Ovary (tissue), 10 donors: ENCODE measurements at regions of chr3 and their contacts with region 1.

Region 1: DNA sequence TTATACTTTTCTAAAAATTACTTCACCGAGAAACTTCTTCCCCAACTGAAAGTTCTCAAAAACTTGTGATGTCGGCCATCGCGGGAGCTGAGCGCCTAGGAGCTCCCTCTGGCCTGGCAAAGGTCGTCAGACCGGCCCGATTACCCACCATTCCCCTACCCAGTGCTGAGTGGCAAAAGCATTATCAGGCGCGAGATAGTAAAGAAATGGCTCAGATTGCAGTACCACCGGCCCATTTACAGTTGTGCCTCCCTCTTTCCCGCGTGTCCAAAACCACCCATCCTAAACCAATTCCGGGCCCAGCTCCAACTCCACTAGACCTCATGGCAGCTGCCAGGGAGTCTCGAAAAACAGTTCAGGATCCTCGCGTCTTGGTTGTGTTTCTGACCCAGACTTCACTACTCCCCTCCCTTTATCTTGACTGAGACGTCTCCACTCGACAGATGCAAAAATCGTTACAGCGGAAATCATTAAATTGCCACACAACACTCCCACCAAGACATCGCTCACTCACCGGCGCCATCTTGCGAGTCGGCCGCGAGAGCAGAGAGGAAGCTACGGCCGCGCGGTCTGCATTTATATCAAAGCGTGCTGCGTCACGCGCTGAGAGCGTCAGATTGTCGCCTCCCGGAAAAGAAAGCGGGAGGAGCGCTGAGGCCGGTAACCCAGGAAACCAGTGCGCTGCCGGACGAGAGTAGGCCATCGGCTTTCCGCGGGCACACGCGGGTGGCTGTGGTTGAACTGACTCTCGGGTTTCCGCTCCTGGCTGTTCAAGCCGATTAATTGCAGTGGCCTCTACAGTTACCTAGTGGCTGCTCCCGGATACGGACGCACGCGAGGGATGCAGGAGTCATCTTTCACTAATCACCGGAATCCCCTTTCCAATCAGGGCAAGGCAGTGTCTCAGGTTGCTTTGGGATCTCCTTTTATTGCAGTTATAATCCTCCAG is at the start of gene RPL22L1:
- DNase-seq: peak; percentile 92 to 95 (median 93)
- H3K4me3 ChIP-seq: peak within 1 kb of the TSS; percentile 82
- H3K27ac ChIP-seq: peak within 1 kb of the TSS; percentile 33 to 82
- H3K4me1 ChIP-seq: peaks cover 4% of the 10 kb centered on the region
- H3K27me3 ChIP-seq: no peaks in the 10 kb centered on the region
- CTCF ChIP-seq: peak in 2 of 3 donors; percentile 29 to 33
- EP300 ChIP-seq: no peak
- POLR2A ChIP-seq: peak; percentile 84
- total RNA-seq, gene RPL22L1: 41.7 to 171 (median 68.4) TPM

Region 2: DNA sequence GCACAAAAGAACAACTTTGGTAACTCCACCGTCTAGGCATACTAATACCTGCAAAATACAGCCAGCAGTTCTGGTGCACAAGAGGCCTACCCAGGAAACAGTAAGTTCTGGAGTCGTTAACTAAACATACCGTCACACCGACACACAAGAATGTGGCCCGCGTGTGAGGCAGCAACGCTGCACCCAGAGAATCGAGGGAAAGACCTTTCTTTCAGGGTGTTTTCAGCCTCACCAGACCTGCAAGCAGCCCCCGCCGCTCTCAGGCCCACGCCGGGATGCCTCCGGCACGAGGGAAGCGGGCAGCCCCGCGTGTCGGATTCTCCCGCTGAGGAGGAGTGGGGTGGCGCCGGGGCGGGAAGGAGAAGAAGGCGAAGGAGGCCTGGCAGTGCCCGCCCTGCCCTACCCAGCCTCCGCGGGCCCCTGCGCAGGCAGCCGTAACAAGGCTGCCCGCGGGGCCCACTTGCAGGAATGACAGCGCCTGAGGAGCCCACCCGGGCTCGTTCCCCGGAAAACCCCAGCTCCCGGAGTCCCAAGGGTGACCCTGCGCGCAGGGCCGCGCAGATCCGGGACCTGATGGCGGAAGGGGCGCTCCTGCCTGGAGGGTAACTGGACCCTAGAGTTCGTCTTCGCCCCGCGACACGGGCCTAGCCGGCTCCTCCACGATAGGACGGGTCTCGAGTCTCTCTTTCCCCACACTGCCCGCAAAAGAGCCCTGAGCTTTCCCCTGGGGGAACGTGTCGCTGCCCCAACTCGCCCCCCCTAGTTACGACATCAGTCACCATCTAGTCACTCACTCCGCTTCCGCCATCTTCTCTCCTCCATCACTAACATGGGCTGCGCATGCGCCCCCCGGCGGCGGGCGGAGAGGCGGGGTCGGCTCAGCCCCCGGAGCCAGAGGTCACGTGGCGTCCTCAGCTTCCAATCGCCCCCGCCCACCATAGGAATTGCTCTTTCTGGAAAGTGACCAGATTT is 688.7 kb before region 1 on chr3 and contains the start of gene PHC3:
- intact Hi-C with region 1: loop called in 1 of 4 experiments (anchors 10 kb)
- DNase-seq: peak; percentile 90 to 95 (median 93)
- H3K4me3 ChIP-seq: peak within 1 kb of the TSS; percentile 75
- H3K27ac ChIP-seq: peak within 1 kb of the TSS; percentile 82 to 83
- H3K4me1 ChIP-seq: peaks cover 4% of the 10 kb centered on the region
- H3K27me3 ChIP-seq: no peaks in the 10 kb centered on the region
- CTCF ChIP-seq: peak in 2 of 3 donors; percentile 47 to 49
- EP300 ChIP-seq: no peak
- POLR2A ChIP-seq: peak; percentile 86
- total RNA-seq, gene PHC3: 43.3 to 121 (median 91.3) TPM